ENCODE measurements at regions of chr12 and their contacts with region 1.

Region 1: GRCh38 chr12:12786716-12787601 is 1.5 kb downstream of the APOLD1 start:
- DNase-seq: peak; percentile 67 to 80 (median 80)
- H3K4me3 ChIP-seq: peak overlapping the region; percentile 62 to 87 (median 69)
- H3K27ac ChIP-seq: peak overlapping the region in 1 of 2 experiments; percentile 21
- H3K4me1 ChIP-seq: peaks cover 4 to 17% (median 12%) of the 10 kb centered on the region in 4 experiments
- H3K27me3 ChIP-seq: no peaks in the 10 kb centered on the region

Region 2: GRCh38 chr12:12797794-12798152 is 10.8 kb after region 1 on chr12:
- CTCF ChIA-PET with region 1: interaction called, 12 read pairs
- POLR2A ChIA-PET with region 1: no interaction called
- DNase-seq: no peak
- H3K4me3 ChIP-seq: no peak overlapping the region
- H3K27ac ChIP-seq: no peak overlapping the region
- H3K4me1 ChIP-seq: no peaks in the 10 kb centered on the region
- H3K27me3 ChIP-seq: no peaks in the 10 kb centered on the region

Region 3: DNA sequence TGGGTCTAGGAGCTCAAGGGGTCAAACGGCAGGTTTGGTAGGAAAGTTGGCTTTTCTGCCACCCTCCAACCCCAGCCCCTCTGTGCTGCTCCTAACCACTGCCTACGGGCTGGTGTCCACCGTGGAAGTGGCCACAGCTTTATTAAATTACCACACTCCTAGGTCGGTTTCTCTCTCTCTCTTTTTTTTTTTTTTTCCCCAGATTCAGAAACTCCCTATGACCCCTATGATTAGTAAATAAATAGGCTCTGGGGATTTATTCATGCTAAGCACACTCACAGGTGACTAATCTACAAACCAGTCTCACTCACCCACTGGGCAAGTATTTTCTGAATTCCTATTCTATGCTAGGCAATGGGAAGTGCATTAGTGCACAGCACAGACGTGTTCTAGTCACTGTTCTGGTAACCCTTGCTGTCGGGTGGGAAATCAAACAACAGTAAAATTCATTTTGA is 17.5 kb after region 1 on chr12:
- CTCF ChIA-PET with region 1: interaction called, 12 read pairs
- POLR2A ChIA-PET with region 1: no interaction called
- DNase-seq: no peak
- H3K4me3 ChIP-seq: no peak overlapping the region
- H3K27ac ChIP-seq: no peak overlapping the region
- H3K4me1 ChIP-seq: peaks cover 0 to 22% (median 14%) of the 10 kb centered on the region in 4 experiments
- H3K27me3 ChIP-seq: no peaks in the 10 kb centered on the region

Measured in common myeloid progenitor, CD34-positive (primary cell).